ENCODE measurements at regions of chr13 and their contacts with region 1.

Region 1: GRCh38 chr13:40666045-40666904 is at the start of gene FOXO1:
- DNase-seq: peak; percentile 65 to 94
- H3K4me3 ChIP-seq: peak within 1 kb of the TSS; percentile 74 to 79
- H3K27ac ChIP-seq: peak within 1 kb of the TSS; percentile 96 to 100
- H3K4me1 ChIP-seq: peaks cover 0 to 18% of the 10 kb centered on the region in 2 donors
- H3K27me3 ChIP-seq: no peaks in the 10 kb centered on the region
- CTCF ChIP-seq: peak in 1 of 3 experiments; percentile 17
- total RNA-seq, gene FOXO1: 65.1 TPM

Region 2: DNA sequence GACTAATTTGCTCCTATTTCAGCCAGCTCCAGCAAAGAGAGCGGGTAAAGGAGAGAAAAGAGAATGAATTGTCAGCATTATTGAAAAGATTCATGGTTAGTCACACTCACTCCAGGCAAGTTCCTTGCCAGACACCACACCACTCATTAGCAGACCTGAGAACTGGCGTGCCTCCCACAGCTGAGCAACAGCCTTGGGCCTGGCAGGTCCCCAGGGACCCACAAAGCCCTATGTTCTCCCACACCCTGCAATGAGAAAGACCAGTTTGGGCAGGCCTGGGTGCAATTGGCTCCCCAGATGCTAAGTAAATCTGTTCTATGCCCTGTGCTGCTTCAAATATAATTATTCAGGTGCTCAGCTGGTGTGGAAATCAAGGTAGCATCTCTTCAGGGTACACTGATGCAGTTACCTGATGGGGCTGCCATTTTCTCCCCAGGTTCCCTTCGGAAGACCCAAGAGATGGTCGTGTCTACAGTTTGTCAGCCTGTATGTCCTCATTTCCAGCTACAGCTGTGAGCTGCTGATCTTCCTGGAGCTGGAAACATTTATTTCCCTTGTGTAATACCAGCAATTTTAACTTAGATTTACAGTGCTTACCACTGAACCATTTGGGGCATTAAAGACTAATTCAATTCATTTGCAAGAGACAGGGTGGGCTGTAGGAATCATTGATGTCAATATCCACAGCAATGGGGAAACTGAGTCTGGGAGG is 605.8 kb before region 1 on chr13:
- intact Hi-C with region 1: loop called (anchors 5 kb)
- DNase-seq: peak; percentile 46 to 86
- H3K4me3 ChIP-seq: no peak overlapping the region
- H3K27ac ChIP-seq: no peak overlapping the region
- H3K4me1 ChIP-seq: peaks cover 0 to 14% of the 10 kb centered on the region in 2 donors
- H3K27me3 ChIP-seq: no peaks in the 10 kb centered on the region
- CTCF ChIP-seq: no peak

Region 3: DNA sequence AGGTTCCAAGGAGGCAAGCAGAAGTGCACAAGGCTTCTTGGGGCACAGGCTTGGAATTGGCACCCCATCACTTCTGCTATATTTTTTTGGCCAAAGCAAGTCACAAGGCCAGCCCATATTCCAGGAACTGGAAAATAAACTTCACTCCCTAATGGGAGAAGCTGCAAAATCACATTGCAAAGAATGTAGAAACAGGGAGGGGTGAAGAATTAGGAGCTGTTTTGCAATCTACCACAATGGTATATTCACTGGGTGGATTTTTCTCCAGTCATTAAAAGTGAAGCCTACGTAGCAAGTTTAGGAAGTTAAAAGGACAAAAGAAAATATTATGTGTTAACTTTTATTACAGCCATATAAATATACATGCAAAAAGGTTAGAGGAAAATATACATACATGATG is 546.0 kb before region 1 on chr13:
- intact Hi-C with region 1: loop called (anchors 5 kb)
- DNase-seq: no peak
- H3K4me3 ChIP-seq: no peak overlapping the region
- H3K27ac ChIP-seq: peak overlapping the region; percentile 61 to 65
- H3K4me1 ChIP-seq: peaks cover 2 to 38% of the 10 kb centered on the region in 2 donors
- H3K27me3 ChIP-seq: no peaks in the 10 kb centered on the region
- CTCF ChIP-seq: no peak

Region 4: DNA sequence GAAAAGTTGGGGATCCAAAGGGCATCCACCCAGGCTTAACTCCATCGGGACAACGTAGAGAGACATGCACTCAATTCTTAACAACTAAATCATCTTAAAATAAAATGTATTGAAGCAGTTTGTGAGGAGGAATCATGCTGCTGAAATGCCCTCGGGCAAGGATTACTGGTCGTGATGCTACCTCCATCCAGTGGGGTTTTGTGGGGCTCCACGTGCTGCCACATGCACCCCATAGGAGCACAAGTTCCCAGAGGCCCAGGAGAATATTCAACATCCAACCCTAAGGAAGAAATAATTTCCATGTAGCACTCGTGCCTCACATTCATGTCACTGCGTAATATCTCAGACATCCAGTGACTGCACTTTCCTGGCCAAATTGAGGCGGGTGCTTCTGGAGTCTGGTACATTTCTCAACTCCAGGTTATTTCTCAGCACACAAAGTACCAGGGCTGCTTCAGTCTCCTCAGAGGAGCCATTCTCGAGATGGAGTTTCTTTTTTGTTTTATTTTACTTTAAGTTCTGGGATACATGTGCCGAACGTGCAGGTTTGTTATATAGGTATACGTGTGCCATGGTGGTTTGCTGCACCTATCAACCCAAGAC is 429.6 kb before region 1 on chr13:
- intact Hi-C with region 1: loop called (anchors 2 kb)
- DNase-seq: peak; percentile 67 to 94
- H3K4me3 ChIP-seq: peak overlapping the region in 1 of 2 donors; percentile 13
- H3K27ac ChIP-seq: peak overlapping the region; percentile 95 to 98
- H3K4me1 ChIP-seq: peaks cover 6 to 25% of the 10 kb centered on the region in 2 donors
- H3K27me3 ChIP-seq: no peaks in the 10 kb centered on the region
- CTCF ChIP-seq: no peak

Region 5: DNA sequence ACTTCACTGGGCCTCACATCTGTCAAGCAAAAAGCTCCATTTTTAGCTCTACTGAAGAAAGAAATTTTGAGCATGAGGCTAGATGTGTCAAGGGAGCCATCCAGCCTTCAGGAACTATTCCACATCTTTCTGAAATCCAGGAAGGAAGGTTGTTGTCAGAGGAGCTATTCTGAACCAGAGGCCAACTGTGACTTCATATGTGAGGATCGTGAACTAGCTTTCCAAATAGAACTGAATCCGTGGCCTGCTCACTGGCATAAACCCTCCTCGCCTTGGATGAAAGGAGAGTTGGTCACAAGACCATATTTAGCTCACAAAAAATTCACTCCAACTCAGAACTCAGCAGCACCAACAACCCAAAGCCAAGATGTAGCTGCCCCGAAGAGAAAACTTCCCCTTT is 195.6 kb before region 1 on chr13:
- intact Hi-C with region 1: loop called (anchors 2 kb)
- DNase-seq: peak in 1 of 2 donors; percentile 88
- H3K4me3 ChIP-seq: no peak overlapping the region
- H3K27ac ChIP-seq: peak overlapping the region; percentile 90
- H3K4me1 ChIP-seq: peaks cover 8 to 14% of the 10 kb centered on the region in 2 donors
- H3K27me3 ChIP-seq: no peaks in the 10 kb centered on the region
- CTCF ChIP-seq: no peak

Region 6: DNA sequence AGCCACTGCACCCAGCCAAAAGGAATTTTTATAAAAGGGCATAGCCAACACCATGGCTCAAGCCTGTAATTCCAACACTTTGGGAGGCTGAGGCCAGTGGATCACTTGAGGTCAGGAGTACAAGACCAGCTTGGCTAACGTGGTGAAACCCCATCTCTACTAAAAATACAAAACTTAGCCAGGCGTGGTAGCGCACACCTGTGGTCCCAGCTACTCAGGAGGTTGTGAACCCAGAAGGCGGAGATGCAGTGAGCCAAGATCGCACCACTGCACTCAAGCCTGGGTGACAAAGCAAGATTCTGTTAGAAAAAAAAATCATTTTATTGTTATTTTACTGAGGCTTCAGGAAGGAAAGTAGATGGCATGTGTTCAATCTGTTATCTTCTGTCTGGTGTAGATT is 31.4 kb after region 1 on chr13:
- intact Hi-C with region 1: no loop called
- DNase-seq: no peak
- H3K4me3 ChIP-seq: no peak overlapping the region
- H3K27ac ChIP-seq: no peak overlapping the region
- H3K4me1 ChIP-seq: no peaks in the 10 kb centered on the region
- H3K27me3 ChIP-seq: no peaks in the 10 kb centered on the region
- CTCF ChIP-seq: no peak

Region 7: GRCh38 chr13:42039946-42040729 is 1373.9 kb after region 1 on chr13:
- intact Hi-C with region 1: loop called (anchors 10 kb)
- DNase-seq: peak; percentile 65 to 95
- H3K4me3 ChIP-seq: peak overlapping the region; percentile 78 to 91
- H3K27ac ChIP-seq: peak overlapping the region; percentile 92 to 97
- H3K4me1 ChIP-seq: peaks cover 0 to 8% of the 10 kb centered on the region in 2 donors
- H3K27me3 ChIP-seq: no peaks in the 10 kb centered on the region
- CTCF ChIP-seq: no peak